PC-9 (cell line): ENCODE measurements at regions of chr3 and their contacts with region 1.

Region 1: GRCh38 chr3:61707492-61707891 is 146.1 kb downstream of the PTPRG start:
- DNase-seq: no peak
- H3K4me3 ChIP-seq: no peak overlapping the region
- H3K27ac ChIP-seq: 0 out of 2 replicates have a peak overlapping the region, but pooled peaks have one; percentile 30
- H3K4me1 ChIP-seq: peaks cover 14% of the 10 kb centered on the region; the same call in 1 of the 2 replicates
- H3K27me3 ChIP-seq: no peaks in the 10 kb centered on the region
- CTCF ChIP-seq: no peak

Region 2: GRCh38 chr3:61688307-61688984 is 19.0 kb before region 1 on chr3:
- CTCF ChIA-PET with region 1: interaction called, 14 read pairs
- POLR2A ChIA-PET with region 1: no interaction called
- intact Hi-C with region 1: no loop called
- DNase-seq: no peak
- H3K4me3 ChIP-seq: no peak overlapping the region
- H3K27ac ChIP-seq: no peak overlapping the region
- H3K4me1 ChIP-seq: peaks cover 12% of the 10 kb centered on the region; the same call in 1 of the 2 replicates
- H3K27me3 ChIP-seq: no peaks in the 10 kb centered on the region
- CTCF ChIP-seq: no peak